Calu3 (cell line): ENCODE measurements at regions of chr4 and their contacts with region 1.

Region 1: DNA sequence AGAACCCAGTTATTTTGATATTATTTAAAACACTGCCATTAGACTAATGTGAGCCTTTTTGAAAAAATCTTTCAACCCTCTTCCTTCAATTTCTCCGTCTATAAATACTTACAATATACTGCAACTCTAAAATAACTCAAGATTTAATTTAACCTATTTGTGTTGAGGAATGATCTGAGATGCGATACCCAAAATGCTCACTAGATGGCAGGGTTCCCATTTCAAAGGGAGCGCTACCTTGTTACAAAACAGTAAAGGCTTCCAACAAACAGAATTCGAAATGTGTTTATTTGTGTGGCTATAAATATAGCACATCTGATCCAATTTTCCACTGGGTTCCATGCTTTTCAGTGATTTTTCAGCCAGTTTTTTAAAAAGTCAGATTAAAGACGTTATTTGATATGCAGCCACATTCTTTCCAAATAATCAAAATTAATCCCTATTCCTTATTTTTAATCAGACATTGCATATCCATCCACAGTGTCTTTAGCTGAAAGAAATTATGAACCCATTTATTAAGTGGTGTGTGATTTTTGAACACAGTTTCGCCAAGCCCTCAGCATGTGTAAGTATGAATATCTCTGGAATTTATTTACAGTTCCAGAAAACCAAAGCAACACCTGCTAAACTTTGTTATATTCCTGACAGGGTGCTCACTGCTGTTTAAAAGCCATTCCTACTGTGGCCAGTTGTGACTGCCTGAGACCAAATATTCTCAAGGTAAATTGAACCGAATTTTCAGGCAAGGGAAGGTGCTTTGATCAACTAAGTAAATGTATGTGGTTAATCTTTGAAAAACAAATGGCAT is 668.0 kb upstream of the LCORL start:
- DNase-seq: peak; percentile 61
- H3K4me3 Mint-ChIP-seq: no peak overlapping the region
- H3K27ac Mint-ChIP-seq: peak overlapping the region; percentile 5
- H3K4me1 Mint-ChIP-seq: peaks cover 50% of the 10 kb centered on the region
- H3K27me3 Mint-ChIP-seq: no peaks in the 10 kb centered on the region
- CTCF ChIP-seq: peak; percentile 59

Region 2: GRCh38 chr4:16838226-16838875 is 1851.2 kb before region 1 on chr4:
- CTCF ChIA-PET with region 1: no interaction called
- intact Hi-C with region 1: no loop called
- DNase-seq: no peak
- H3K4me3 Mint-ChIP-seq: no peak overlapping the region
- H3K27ac Mint-ChIP-seq: no peak overlapping the region
- H3K4me1 Mint-ChIP-seq: no peaks in the 10 kb centered on the region
- H3K27me3 Mint-ChIP-seq: no peaks in the 10 kb centered on the region
- CTCF ChIP-seq: no peak

Region 3: GRCh38 chr4:18422676-18423075 is 266.8 kb before region 1 on chr4:
- CTCF ChIA-PET with region 1: no interaction called
- intact Hi-C with region 1: no loop called
- DNase-seq: no peak
- H3K4me3 Mint-ChIP-seq: no peak overlapping the region
- H3K27ac Mint-ChIP-seq: no peak overlapping the region
- H3K4me1 Mint-ChIP-seq: no peaks in the 10 kb centered on the region
- H3K27me3 Mint-ChIP-seq: no peaks in the 10 kb centered on the region
- CTCF ChIP-seq: no peak

Region 4: DNA sequence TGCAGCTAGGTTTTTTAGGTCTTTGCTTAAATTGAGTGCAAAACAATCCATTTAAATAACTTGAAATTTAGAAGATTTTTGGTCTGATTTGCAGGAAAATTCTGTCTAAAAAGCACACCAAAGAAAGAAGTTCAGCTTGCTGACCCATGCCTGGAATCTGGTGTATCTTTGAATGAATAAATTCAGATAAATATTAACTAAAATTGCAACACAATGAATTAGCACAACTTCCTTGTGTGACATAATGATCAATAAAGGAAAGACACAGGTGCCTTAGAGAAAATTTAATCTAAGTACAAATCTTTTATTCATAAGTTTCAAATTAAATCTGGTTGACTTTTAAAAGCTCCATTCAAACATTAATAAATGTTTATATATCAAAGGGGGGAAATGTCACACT is 123.5 kb after region 1 on chr4:
- CTCF ChIA-PET with region 1: no interaction called
- intact Hi-C with region 1: loop called (anchors 2 kb)
- DNase-seq: no peak
- H3K4me3 Mint-ChIP-seq: no peak overlapping the region
- H3K27ac Mint-ChIP-seq: peak overlapping the region; percentile 79
- H3K4me1 Mint-ChIP-seq: peaks cover 16% of the 10 kb centered on the region
- H3K27me3 Mint-ChIP-seq: no peaks in the 10 kb centered on the region
- CTCF ChIP-seq: no peak

Region 5: GRCh38 chr4:18882463-18882862 is 193.0 kb after region 1 on chr4:
- CTCF ChIA-PET with region 1: no interaction called
- intact Hi-C with region 1: no loop called
- DNase-seq: no peak
- H3K4me3 Mint-ChIP-seq: no peak overlapping the region
- H3K27ac Mint-ChIP-seq: no peak overlapping the region
- H3K4me1 Mint-ChIP-seq: peaks cover 9% of the 10 kb centered on the region
- H3K27me3 Mint-ChIP-seq: no peaks in the 10 kb centered on the region
- CTCF ChIP-seq: no peak

Region 6: DNA sequence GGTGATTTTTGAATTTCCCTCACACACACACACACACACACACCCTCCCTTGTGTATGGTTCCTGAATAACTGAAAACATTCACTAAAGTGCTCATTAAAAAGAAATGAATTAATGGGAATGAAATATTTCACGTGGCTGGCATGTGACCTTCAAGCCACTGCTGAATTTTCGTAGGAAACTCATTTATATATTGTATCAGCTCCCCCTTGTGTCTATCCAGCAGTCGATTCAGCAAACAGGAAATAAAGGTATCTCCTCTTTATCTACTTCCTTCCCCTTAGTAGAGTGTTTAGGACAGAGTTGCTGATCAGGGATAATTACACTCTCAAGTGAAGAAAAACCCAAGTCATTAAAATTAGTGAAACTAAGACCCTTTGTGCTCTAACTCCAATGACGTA is 244.7 kb after region 1 on chr4:
- CTCF ChIA-PET with region 1: no interaction called
- intact Hi-C with region 1: loop called (anchors 1 kb)
- DNase-seq: no peak
- H3K4me3 Mint-ChIP-seq: no peak overlapping the region
- H3K27ac Mint-ChIP-seq: no peak overlapping the region
- H3K4me1 Mint-ChIP-seq: peaks cover 25% of the 10 kb centered on the region
- H3K27me3 Mint-ChIP-seq: no peaks in the 10 kb centered on the region
- CTCF ChIP-seq: no peak

Region 7: DNA sequence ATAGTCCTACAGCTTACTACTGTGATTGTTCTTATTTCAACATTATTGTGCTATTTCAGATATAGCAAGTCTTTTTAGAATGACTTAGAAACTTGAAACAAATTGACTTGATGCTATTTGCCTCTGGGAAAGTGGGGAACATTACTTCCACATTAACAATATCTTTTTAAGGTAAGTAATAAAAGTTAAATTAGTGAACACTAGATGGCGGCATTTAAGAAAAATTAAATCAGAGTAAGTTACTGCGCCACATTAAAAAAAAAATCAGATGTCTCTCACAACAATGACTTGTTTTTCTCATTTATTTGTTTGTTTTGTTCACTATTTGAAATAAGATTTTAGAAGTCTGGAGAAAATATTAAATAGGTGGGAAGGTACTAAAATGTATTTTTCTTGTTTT is 535.3 kb after region 1 on chr4:
- CTCF ChIA-PET with region 1: no interaction called
- intact Hi-C with region 1: loop called (anchors 5 kb)
- DNase-seq: no peak
- H3K4me3 Mint-ChIP-seq: no peak overlapping the region
- H3K27ac Mint-ChIP-seq: no peak overlapping the region
- H3K4me1 Mint-ChIP-seq: no peaks in the 10 kb centered on the region
- H3K27me3 Mint-ChIP-seq: no peaks in the 10 kb centered on the region
- CTCF ChIP-seq: no peak